ENCODE measurements at regions of chr16 and their contacts with region 1.

Region 1: GRCh38 chr16:77236063-77236511 is 36.9 kb downstream of the SYCE1L start:
- DNase-seq: peak; percentile 93

Region 2: GRCh38 chr16:77581706-77582105 is 345.6 kb after region 1 on chr16:
- intact Hi-C with region 1: loop called (anchors 1 kb)
- DNase-seq: no peak

Region 3: GRCh38 chr16:77660311-77660710 is 424.2 kb after region 1 on chr16:
- intact Hi-C with region 1: loop called (anchors 10 kb)
- DNase-seq: no peak

Region 4: DNA sequence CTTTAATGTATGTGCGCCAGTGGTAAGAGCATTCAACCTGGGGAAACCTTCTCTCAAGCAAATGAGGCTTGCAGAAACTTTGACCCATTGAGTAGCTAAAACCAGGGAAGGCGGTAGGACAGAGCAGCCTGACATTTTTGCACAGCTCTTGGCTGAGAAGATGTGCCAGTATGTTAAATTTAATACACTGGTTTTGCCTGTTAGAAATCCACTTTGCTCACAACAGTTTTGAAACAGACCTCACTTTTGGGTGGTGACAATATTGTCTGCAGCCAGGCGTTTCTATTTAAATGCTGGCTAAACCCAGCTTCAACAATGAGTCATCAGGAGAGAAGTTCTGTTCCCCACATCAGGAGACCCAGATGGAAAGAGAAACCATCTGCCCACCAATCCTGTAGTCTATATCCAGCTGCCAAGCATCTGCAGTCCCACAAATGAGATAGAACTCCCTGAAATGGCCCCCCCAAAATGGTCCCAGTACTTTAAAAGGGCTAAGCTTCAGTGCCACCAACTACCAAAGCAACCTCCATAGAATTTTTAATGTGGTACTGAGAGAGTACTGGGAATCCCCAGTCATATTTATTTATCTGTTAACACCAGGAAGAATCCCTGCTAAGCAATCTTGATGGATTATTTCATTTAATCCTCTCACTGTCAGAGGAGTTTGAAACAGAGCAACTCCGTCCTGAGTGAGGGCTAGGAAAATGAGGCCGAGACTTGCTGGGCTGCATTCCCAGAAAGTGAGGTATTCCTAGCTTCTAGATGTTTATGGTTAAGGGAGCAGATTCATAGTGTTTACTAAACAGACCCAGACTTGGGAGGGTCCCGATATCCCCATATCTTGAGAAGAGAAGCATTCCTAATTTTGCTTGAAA is 757.3 kb after region 1 on chr16:
- intact Hi-C with region 1: loop called (anchors 10 kb)
- DNase-seq: no peak